ENCODE measurements at regions of chr9 and their contacts with region 1.

Region 1: DNA sequence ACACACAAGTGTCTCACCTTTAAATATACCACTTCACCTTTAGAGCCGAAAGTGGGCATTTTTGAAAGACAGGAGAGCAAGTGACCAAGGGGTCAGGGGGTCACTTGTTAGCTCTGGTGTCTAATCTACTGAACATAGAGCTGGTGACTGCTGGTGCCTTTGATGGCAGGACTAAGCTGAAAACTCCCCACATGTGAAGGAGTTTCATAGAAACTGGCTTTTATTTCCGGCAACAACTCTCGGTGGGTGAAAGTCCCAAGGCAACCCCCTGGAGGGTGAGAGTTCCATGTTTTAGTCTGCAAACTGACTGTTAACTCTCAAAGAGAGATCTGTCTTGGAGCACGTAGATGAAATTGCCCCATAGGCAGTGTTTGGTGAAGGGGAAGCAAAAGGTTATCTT is 466.9 kb downstream of the DMRTA1 start:
- DNase-seq: peak; percentile 48
- ATAC-seq: peak; percentile 94
- H3K4me3 ChIP-seq: no peak overlapping the region
- H3K27ac ChIP-seq: no peak overlapping the region
- H3K4me1 ChIP-seq: no peaks in the 10 kb centered on the region
- H3K27me3 ChIP-seq: no peaks in the 10 kb centered on the region
- CTCF ChIP-seq: no peak
- EP300 ChIP-seq: peak in 1 of 2 experiments; percentile 45; a peak in 1 of 4 replicates
- POLR2A ChIP-seq: no peak
- RAD21 ChIP-seq: no peak

Region 2: DNA sequence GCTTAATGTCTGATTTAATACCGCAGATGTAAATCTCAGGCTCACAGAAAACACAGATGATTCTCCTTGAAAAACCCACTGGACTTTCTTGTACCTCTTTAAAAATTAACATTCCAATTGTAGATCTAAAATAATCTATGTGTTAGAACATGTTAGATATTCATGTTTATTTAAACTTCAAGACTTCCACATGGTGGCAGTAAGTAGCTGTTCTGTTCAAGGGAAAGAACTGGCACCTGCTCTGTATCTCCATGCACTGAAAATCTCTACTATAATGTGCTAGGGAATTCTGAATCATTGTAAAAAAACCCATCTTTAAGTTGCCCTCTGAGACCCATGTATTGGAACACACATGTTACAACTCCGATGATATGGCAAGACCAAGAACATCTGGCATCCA is 100.0 kb before region 1 on chr9:
- CTCF ChIA-PET with region 1: no interaction called
- POLR2A ChIA-PET with region 1: interaction called, 3 read pairs
- RAD21 ChIA-PET with region 1: interaction called, 10 read pairs
- SMC1A ChIA-PET with region 1: interaction called, 5 read pairs
- in situ Hi-C with region 1: no loop called
- intact Hi-C with region 1: no loop called
- DNase-seq: no peak
- ATAC-seq: peak; percentile 74
- H3K4me3 ChIP-seq: no peak overlapping the region
- H3K27ac ChIP-seq: no peak overlapping the region
- H3K4me1 ChIP-seq: no peaks in the 10 kb centered on the region
- H3K27me3 ChIP-seq: no peaks in the 10 kb centered on the region
- CTCF ChIP-seq: peak in 1 of 3 experiments; percentile 49; a peak in 2 of 6 replicates
- EP300 ChIP-seq: no peak
- POLR2A ChIP-seq: no peak
- RAD21 ChIP-seq: peak; percentile 55

Region 3: DNA sequence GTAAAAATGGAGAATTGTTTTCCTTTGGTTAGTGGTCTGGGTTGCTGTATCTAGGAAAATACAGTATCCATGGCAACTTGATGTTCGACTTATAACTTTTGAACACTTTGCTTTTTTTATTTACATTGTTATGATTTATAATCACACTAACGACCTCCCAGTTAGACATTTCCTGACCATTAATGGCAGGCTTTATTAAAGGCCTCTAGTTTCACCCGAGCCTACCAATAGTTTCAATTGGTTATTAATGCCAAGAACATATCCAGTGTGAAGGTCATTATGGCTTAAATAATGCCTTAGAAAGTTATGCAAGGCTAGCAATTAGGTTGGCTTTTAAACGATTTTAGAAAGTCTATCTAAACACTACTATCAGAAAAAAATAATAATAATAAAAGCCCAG is 14.9 kb before region 1 on chr9:
- CTCF ChIA-PET with region 1: interaction called, 3 read pairs
- POLR2A ChIA-PET with region 1: interaction called, 3 read pairs
- RAD21 ChIA-PET with region 1: no interaction called
- SMC1A ChIA-PET with region 1: interaction called, 14 read pairs
- in situ Hi-C with region 1: no loop called
- intact Hi-C with region 1: no loop called
- DNase-seq: no peak
- ATAC-seq: no peak
- H3K4me3 ChIP-seq: no peak overlapping the region
- H3K27ac ChIP-seq: no peak overlapping the region
- H3K4me1 ChIP-seq: no peaks in the 10 kb centered on the region
- H3K27me3 ChIP-seq: no peaks in the 10 kb centered on the region
- CTCF ChIP-seq: no peak
- EP300 ChIP-seq: no peak
- POLR2A ChIP-seq: no peak
- RAD21 ChIP-seq: no peak

Region 4: GRCh38 chr9:23005156-23005555 is 91.6 kb after region 1 on chr9:
- CTCF ChIA-PET with region 1: no interaction called
- POLR2A ChIA-PET with region 1: no interaction called
- RAD21 ChIA-PET with region 1: no interaction called
- SMC1A ChIA-PET with region 1: no interaction called
- in situ Hi-C with region 1: no loop called
- intact Hi-C with region 1: no loop called
- DNase-seq: no peak
- ATAC-seq: no peak
- H3K4me3 ChIP-seq: no peak overlapping the region
- H3K27ac ChIP-seq: no peak overlapping the region
- H3K4me1 ChIP-seq: no peaks in the 10 kb centered on the region
- H3K27me3 ChIP-seq: no peaks in the 10 kb centered on the region
- CTCF ChIP-seq: no peak
- EP300 ChIP-seq: no peak
- POLR2A ChIP-seq: no peak
- RAD21 ChIP-seq: no peak